Activated CD4-positive, alpha-beta T cell treated with anti-CD3 and anti-CD28 coated beads, Interleukin-2, amount 10 ng/mL, durations not matched to agents 7 days and 5 days (primary cell): ENCODE measurements at regions of chr1 and their contacts with region 1.

Region 1: GRCh38 chr1:160629286-160630210 is 17.3 kb downstream of the SLAMF1 start:
- DNase-seq: peak; percentile 90
- H3K4me3 Mint-ChIP-seq: peak overlapping the region; percentile 73
- H3K27ac Mint-ChIP-seq: peak overlapping the region; percentile 94
- H3K4me1 Mint-ChIP-seq: peaks cover 97% of the 10 kb centered on the region
- H3K27me3 Mint-ChIP-seq: no peaks in the 10 kb centered on the region

Region 2: GRCh38 chr1:160639652-160640051 is 10.1 kb after region 1 on chr1:
- CTCF ChIA-PET with region 1: interaction called, 11 read pairs
- POLR2A ChIA-PET with region 1: interaction called, 6 read pairs
- DNase-seq: no peak
- H3K4me3 Mint-ChIP-seq: peak overlapping the region; percentile 71
- H3K27ac Mint-ChIP-seq: peak overlapping the region; percentile 94
- H3K4me1 Mint-ChIP-seq: peaks cover 94% of the 10 kb centered on the region
- H3K27me3 Mint-ChIP-seq: no peaks in the 10 kb centered on the region